Esophagus muscularis mucosa (tissue), 4 donors: ENCODE measurements at regions of chr6 and their contacts with region 1.

Region 1: GRCh38 chr6:19322691-19323485 is 514.3 kb upstream of the ID4 start:
- DNase-seq: no peak
- H3K4me3 ChIP-seq: no peak overlapping the region
- H3K27ac ChIP-seq: peak overlapping the region; percentile 11 to 52 (median 22)
- H3K4me1 ChIP-seq: peaks cover 0 to 65% (median 62%) of the 10 kb centered on the region in 4 donors
- H3K27me3 ChIP-seq: no peaks in the 10 kb centered on the region
- CTCF ChIP-seq: peak in 1 of 3 experiments; percentile 36
- EP300 ChIP-seq: no peak
- POLR2A ChIP-seq: no peak

Region 2: DNA sequence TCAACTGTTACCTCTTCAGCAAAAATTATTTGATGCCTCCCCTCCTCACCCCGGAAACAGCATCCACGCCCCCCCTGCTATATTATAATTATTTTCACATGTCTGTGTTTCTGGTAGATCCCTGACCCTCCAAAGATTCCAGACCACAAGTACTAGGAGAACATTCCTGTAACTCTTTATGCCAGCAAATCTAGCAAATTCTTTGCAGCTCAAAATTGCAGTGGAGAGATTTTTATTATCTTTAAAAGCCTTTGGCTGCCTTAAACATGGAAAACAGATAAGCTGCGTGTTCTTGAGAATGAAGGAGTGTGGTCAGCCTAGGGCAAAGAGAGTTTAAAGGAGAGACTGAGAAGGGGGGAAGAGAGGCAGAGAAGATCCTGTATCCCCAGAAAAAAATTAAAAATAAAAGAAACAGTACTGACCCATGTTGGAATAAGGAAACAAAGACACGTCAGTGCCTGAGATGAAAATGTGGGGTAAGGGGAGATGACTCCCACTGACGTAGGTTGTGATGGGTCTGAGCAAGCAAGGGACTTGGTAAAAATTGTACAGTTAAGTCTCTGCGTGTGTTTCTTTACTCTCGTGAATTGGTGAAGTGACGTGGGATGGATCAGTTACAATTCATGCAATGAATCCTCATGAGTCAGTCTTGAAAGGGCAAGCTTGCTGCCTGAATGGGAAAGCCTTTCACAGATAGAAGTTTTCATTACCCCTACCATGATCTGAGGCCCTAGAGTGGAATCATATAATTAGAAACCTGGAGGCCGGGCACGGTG is 522.6 kb after region 1 on chr6:
- intact Hi-C with region 1: loop called (anchors 5 kb)
- DNase-seq: no peak
- H3K4me3 ChIP-seq: no peak overlapping the region
- H3K27ac ChIP-seq: peak overlapping the region in 1 of 4 donors; percentile 18
- H3K4me1 ChIP-seq: peaks cover 0 to 45% (median 41%) of the 10 kb centered on the region in 4 donors
- H3K27me3 ChIP-seq: no peaks in the 10 kb centered on the region
- CTCF ChIP-seq: no peak
- EP300 ChIP-seq: no peak
- POLR2A ChIP-seq: no peak